Naive thymus-derived CD4-positive, alpha-beta T cell (primary cell): ENCODE measurements at regions of chr6 and their contacts with region 1.

Region 1: GRCh38 chr6:155174576-155175211 is 89.1 kb upstream of the CLDN20 start:
- DNase-seq: peak in 8 of 9 donors; percentile 38 to 63 (median 54)
- ATAC-seq: peak; percentile 79
- H3K4me3 ChIP-seq: no peak overlapping the region
- H3K4me3 Mint-ChIP-seq: peak overlapping the region in 1 of 10 donors; percentile 19
- H3K27ac ChIP-seq: no peak overlapping the region
- H3K27ac Mint-ChIP-seq: peak overlapping the region in 2 of 9 donors; percentile 0 to 69
- H3K4me1 ChIP-seq: peaks cover 8 to 18% of the 10 kb centered on the region in 2 donors
- H3K4me1 Mint-ChIP-seq: peaks cover 8 to 44% (median 22%) of the 10 kb centered on the region in 7 donors
- H3K27me3 ChIP-seq: no peaks in the 10 kb centered on the region
- H3K27me3 Mint-ChIP-seq: no peaks in the 10 kb centered on the region

Region 2: GRCh38 chr6:154675602-154676088 is 499.0 kb before region 1 on chr6:
- CTCF ChIA-PET with region 1: interaction called, 18 read pairs
- POLR2A ChIA-PET with region 1: no interaction called
- intact Hi-C with region 1: loop called (anchors 1 kb)
- DNase-seq: peak; percentile 60 to 89 (median 86)
- ATAC-seq: peak; percentile 100
- H3K4me3 ChIP-seq: no peak overlapping the region
- H3K4me3 Mint-ChIP-seq: no peak overlapping the region
- H3K27ac ChIP-seq: no peak overlapping the region
- H3K27ac Mint-ChIP-seq: no peak overlapping the region
- H3K4me1 ChIP-seq: no peaks in the 10 kb centered on the region
- H3K4me1 Mint-ChIP-seq: no peaks in the 10 kb centered on the region
- H3K27me3 ChIP-seq: no peaks in the 10 kb centered on the region
- H3K27me3 Mint-ChIP-seq: peaks cover 0 to 3% (median 0%) of the 10 kb centered on the region in 5 donors

Region 3: DNA sequence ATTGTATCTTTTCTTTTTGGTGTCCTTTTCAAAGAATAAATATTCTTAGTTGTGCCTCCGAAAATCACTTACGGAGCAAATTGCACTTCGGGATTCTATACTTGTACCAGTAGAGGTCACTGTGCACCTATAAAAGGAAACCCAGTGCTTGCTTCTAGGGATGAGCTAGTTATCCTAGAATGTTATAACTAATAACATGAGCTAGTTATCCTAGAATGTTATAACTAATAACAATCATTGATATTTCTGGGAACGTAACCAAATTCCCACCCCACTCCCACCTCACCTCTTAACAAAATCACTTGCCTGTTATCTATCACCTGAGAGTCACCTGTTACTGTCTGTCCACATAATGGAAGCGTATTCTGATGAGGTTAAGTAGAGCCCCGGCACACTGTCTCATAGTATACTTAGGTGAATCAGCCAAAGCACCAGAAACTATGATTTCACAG is 306.5 kb before region 1 on chr6:
- CTCF ChIA-PET with region 1: no interaction called
- POLR2A ChIA-PET with region 1: no interaction called
- intact Hi-C with region 1: loop called (anchors 1 kb)
- DNase-seq: peak in 5 of 9 donors; percentile 1 to 26 (median 5)
- ATAC-seq: no peak
- H3K4me3 ChIP-seq: no peak overlapping the region
- H3K4me3 Mint-ChIP-seq: no peak overlapping the region
- H3K27ac ChIP-seq: no peak overlapping the region
- H3K27ac Mint-ChIP-seq: no peak overlapping the region
- H3K4me1 ChIP-seq: no peaks in the 10 kb centered on the region
- H3K4me1 Mint-ChIP-seq: peaks cover 0 to 24% (median 5%) of the 10 kb centered on the region in 7 donors
- H3K27me3 ChIP-seq: no peaks in the 10 kb centered on the region
- H3K27me3 Mint-ChIP-seq: no peaks in the 10 kb centered on the region

Region 4: DNA sequence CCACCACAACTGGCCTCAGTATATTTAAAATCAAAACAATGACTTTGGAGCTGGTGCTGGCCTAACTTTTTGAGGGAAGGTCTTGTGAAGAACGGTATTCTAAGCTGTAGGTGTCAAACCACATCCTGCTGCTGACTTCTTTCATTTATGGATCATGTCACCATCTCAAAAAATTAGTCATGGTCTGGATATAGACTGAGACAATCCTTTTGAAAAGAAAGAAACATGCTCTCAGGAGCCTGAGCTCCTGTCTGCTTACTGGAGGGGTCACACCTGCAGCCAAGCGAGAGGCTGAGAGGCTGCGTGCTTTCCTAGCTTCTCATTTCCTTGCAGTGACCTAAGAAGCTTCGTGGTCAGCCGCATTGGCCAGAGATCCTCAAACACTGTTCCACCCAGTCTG is 124.4 kb before region 1 on chr6:
- CTCF ChIA-PET with region 1: no interaction called
- POLR2A ChIA-PET with region 1: no interaction called
- intact Hi-C with region 1: loop called in 1 of 2 experiments (anchors 1 kb)
- DNase-seq: peak in 2 of 9 donors; percentile 4 to 44
- ATAC-seq: peak; percentile 16
- H3K4me3 ChIP-seq: no peak overlapping the region
- H3K4me3 Mint-ChIP-seq: peak overlapping the region in 1 of 10 donors; percentile 57
- H3K27ac ChIP-seq: no peak overlapping the region
- H3K27ac Mint-ChIP-seq: peak overlapping the region in 1 of 9 donors; percentile 79
- H3K4me1 ChIP-seq: peaks cover 0 to 16% of the 10 kb centered on the region in 2 donors
- H3K4me1 Mint-ChIP-seq: peaks cover 2 to 27% (median 5%) of the 10 kb centered on the region in 7 donors
- H3K27me3 ChIP-seq: no peaks in the 10 kb centered on the region
- H3K27me3 Mint-ChIP-seq: peaks cover 0 to 11% (median 0%) of the 10 kb centered on the region in 5 donors

Region 5: DNA sequence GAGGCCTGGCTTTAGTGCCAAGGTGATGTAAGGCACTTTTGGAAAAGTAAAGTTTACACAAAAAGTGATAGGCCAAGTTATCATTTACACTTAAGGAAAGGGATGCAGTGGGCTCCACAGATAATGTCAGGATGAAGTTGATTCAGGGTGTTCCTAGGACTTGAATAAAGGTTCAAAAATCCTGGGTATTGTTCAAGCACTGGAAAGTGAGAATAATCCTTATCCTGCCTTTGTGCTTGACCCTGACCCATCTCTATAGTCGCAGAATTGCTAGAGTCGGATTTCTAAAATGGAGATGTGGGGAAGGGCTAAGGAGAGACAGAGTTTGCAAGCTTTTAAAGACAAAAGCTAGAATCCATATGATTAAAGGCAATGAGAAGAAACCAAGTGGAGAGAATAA is 64.0 kb before region 1 on chr6:
- CTCF ChIA-PET with region 1: no interaction called
- POLR2A ChIA-PET with region 1: no interaction called
- intact Hi-C with region 1: no loop called
- DNase-seq: no peak
- ATAC-seq: no peak
- H3K4me3 ChIP-seq: no peak overlapping the region
- H3K4me3 Mint-ChIP-seq: no peak overlapping the region
- H3K27ac ChIP-seq: no peak overlapping the region
- H3K27ac Mint-ChIP-seq: no peak overlapping the region
- H3K4me1 ChIP-seq: no peaks in the 10 kb centered on the region
- H3K4me1 Mint-ChIP-seq: peaks cover 0 to 18% (median 0%) of the 10 kb centered on the region in 7 donors
- H3K27me3 ChIP-seq: no peaks in the 10 kb centered on the region
- H3K27me3 Mint-ChIP-seq: peaks cover 2 to 25% (median 5%) of the 10 kb centered on the region in 5 donors

Region 6: DNA sequence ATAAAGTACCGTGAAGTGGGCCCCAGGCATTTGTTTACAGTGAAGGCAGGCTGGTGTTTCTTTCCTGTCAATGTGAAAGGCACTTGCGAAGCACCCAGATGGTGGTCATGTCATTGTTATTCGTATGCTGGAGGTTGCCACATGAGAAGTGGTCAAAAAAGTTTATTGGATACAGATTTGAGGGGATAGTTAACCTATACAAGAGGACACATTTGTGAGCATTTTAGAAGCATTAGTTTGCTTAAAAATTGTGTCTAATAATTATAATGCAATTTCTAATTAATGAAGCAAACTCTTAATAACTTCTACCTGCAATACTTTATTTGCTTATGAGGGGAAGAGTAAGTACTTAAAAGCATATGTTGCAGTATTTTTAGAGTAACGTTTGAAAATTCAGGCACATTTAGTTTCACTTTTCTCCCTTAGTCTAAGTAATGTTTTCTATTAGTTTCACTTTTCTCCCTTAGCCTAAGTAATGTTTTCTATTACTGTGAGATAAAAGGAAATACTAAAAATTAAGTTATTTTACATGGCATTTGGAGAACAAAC is 31.6 kb before region 1 on chr6:
- CTCF ChIA-PET with region 1: no interaction called
- POLR2A ChIA-PET with region 1: interaction called, 3 read pairs
- intact Hi-C with region 1: loop called (anchors 1 to 2 kb)
- DNase-seq: peak in 3 of 9 donors; percentile 4 to 15 (median 8)
- ATAC-seq: no peak
- H3K4me3 ChIP-seq: peak overlapping the region; percentile 27
- H3K4me3 Mint-ChIP-seq: peak overlapping the region; percentile 56 to 91 (median 82)
- H3K27ac ChIP-seq: peak overlapping the region; percentile 49
- H3K27ac Mint-ChIP-seq: peak overlapping the region; percentile 83 to 96 (median 90)
- H3K4me1 ChIP-seq: peaks cover 7 to 14% of the 10 kb centered on the region in 2 donors
- H3K4me1 Mint-ChIP-seq: peaks cover 13 to 43% (median 24%) of the 10 kb centered on the region in 7 donors
- H3K27me3 ChIP-seq: no peaks in the 10 kb centered on the region
- H3K27me3 Mint-ChIP-seq: no peaks in the 10 kb centered on the region

Region 7: DNA sequence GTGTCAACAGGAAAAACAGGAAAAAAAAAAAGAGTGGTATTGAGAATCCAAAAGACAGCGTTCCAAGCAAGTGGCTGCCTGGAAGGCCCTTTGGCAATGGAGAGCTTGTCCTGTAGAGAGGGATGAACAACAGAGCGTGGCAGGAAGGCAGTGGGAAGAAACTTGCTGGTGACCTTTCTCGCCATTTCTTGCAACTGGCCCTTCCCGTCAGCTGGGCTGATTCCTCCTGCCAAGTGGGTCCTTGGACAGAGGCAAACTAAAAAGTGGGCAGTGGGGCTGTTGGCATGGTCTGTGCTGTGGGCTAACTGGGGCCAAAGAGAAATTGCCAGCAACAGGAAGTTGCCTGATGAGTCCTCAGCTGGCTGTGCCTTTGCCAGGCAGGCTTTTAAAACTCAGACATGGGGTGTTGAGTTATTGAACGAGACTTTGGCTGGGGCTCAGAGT is 45.2 kb after region 1 on chr6:
- CTCF ChIA-PET with region 1: no interaction called
- POLR2A ChIA-PET with region 1: no interaction called
- intact Hi-C with region 1: no loop called
- DNase-seq: no peak
- ATAC-seq: no peak
- H3K4me3 ChIP-seq: no peak overlapping the region
- H3K4me3 Mint-ChIP-seq: no peak overlapping the region
- H3K27ac ChIP-seq: no peak overlapping the region
- H3K27ac Mint-ChIP-seq: no peak overlapping the region
- H3K4me1 ChIP-seq: peaks cover 0 to 5% of the 10 kb centered on the region in 2 donors
- H3K4me1 Mint-ChIP-seq: peaks cover 0 to 15% (median 6%) of the 10 kb centered on the region in 7 donors
- H3K27me3 ChIP-seq: no peaks in the 10 kb centered on the region
- H3K27me3 Mint-ChIP-seq: peaks cover 4 to 16% (median 12%) of the 10 kb centered on the region in 5 donors

Region 8: DNA sequence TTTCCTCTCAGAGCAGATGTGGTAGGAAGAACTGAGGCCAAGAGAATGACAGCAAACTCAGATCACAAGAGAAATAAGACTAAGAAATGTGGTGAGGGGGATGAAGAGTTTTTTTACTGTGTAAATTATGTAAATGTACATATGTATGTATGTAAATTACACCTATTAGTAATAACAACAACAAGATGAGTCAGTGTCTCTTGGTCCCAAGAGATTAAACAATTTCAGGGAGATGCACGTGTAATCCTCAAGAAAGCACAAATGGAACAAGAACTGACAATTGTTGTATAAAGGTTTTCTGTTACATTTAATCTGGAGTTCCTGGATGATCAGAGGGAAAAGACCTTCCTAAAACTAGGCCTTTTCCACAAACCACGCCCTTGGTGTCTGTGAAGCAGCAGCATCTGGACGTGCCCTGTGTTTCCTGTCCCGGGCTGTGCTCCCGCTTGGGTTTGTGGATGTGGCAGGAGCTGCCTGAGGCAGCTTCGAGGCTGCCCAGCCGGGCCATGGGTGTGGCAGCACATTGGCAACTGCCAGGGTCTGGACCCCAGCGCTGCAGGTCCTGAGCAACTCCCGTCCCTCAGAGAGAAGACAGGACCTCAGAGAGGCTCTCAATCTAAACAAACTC is 90.1 kb after region 1 on chr6:
- CTCF ChIA-PET with region 1: no interaction called
- POLR2A ChIA-PET with region 1: no interaction called
- intact Hi-C with region 1: loop called (anchors 1 to 5 kb)
- DNase-seq: no peak
- ATAC-seq: no peak
- H3K4me3 ChIP-seq: no peak overlapping the region
- H3K4me3 Mint-ChIP-seq: no peak overlapping the region
- H3K27ac ChIP-seq: no peak overlapping the region
- H3K27ac Mint-ChIP-seq: peak overlapping the region in 2 of 9 donors; percentile 8 to 53
- H3K4me1 ChIP-seq: peaks cover 0 to 4% of the 10 kb centered on the region in 2 donors
- H3K4me1 Mint-ChIP-seq: peaks cover 6 to 24% (median 10%) of the 10 kb centered on the region in 7 donors
- H3K27me3 ChIP-seq: no peaks in the 10 kb centered on the region
- H3K27me3 Mint-ChIP-seq: no peaks in the 10 kb centered on the region

Region 9: DNA sequence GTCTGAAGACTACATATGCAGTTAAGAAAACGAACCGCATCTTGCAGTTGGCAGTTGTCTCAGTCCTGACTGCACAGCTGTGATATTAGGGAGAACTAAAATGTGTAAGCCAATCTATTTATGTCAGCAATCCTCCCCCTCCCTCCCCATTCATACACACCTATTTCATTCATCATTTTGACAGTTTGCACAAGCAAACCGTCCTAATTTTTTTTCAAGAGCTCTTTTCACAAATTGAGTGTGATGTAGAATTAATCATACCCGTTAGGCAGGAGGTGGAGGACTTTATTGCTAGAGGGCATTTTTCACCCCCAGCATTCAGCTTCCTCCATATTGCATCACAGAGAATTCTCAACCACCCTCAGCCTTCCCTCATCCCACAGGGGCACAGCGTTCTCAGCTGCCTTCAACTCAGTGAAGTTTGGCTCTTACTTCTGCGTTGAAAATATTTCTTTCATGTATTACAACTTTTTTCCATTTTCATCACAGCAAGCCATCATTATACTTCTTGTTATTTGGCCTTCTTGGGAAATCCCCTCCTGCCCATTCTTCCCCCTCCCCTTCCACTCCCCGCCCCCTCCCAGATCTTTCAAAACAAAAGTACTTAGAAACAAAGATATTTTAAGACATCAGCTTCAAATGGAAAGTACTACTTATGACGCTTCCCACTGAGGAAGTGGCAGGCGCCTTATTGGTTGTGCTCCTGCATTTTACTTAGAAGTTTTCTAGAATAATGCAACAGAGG is 243.5 kb after region 1 on chr6:
- CTCF ChIA-PET with region 1: no interaction called
- POLR2A ChIA-PET with region 1: no interaction called
- intact Hi-C with region 1: loop called in 1 of 2 experiments (anchors 1 kb)
- DNase-seq: peak; percentile 9 to 87 (median 68)
- ATAC-seq: peak; percentile 89
- H3K4me3 ChIP-seq: peak overlapping the region; percentile 44
- H3K4me3 Mint-ChIP-seq: peak overlapping the region; percentile 77 to 89 (median 84)
- H3K27ac ChIP-seq: peak overlapping the region; percentile 84
- H3K27ac Mint-ChIP-seq: peak overlapping the region; percentile 93 to 99 (median 97)
- H3K4me1 ChIP-seq: peaks cover 6 to 15% of the 10 kb centered on the region in 2 donors
- H3K4me1 Mint-ChIP-seq: peaks cover 22 to 50% (median 38%) of the 10 kb centered on the region in 7 donors
- H3K27me3 ChIP-seq: no peaks in the 10 kb centered on the region
- H3K27me3 Mint-ChIP-seq: no peaks in the 10 kb centered on the region